ENCODE measurements at regions of chr21 and their contacts with region 1.

Region 1: DNA sequence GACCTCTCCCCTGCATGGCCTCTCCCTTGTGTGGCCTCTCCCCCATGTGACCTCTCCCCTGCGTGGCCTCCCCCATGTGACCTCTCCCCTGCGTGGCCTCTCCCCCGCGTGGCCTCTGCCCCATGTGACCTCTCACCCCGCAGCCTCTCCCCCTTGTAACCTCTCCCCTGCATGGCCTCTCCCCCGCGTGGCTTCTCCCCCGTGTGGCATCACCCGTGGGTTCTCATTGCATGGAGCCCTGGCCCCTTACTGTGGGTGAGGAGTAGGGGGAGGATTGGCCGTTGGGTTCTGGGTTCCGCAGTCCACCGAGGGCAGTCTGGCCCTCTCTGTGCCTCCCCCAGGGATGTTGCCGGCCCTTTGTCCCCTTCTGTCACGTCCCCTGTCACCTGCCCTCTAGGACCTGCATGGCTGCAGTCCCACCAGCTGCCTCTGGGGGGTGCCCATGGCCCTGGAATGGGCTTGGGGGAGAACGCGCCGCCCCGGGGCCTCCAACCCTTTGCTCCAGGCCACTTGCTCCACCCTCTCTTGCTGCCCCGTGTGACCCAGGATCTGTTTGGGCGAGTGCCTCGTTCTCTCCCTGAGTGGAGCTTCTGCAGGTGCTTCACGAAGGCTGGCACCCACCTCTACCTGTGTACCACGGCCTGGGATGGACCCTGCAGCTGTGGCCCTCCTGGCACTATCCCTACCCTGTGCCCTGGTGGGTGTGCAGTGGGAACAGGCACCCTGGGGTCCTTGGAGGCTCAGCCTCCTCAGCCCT is 21.3 kb downstream of the RRP1 start:
- DNase-seq: peak; percentile 77
- H3K27ac ChIP-seq: peak overlapping the region; percentile 99
- CTCF ChIP-seq: peak; percentile 92

Region 2: GRCh38 chr21:43975495-43975993 is 164.9 kb after region 1 on chr21:
- CTCF ChIA-PET with region 1: interaction called, 16 read pairs
- POLR2A ChIA-PET with region 1: no interaction called
- DNase-seq: peak; percentile 64
- H3K27ac ChIP-seq: peak overlapping the region; percentile 55
- CTCF ChIP-seq: peak; percentile 95

Region 3: DNA sequence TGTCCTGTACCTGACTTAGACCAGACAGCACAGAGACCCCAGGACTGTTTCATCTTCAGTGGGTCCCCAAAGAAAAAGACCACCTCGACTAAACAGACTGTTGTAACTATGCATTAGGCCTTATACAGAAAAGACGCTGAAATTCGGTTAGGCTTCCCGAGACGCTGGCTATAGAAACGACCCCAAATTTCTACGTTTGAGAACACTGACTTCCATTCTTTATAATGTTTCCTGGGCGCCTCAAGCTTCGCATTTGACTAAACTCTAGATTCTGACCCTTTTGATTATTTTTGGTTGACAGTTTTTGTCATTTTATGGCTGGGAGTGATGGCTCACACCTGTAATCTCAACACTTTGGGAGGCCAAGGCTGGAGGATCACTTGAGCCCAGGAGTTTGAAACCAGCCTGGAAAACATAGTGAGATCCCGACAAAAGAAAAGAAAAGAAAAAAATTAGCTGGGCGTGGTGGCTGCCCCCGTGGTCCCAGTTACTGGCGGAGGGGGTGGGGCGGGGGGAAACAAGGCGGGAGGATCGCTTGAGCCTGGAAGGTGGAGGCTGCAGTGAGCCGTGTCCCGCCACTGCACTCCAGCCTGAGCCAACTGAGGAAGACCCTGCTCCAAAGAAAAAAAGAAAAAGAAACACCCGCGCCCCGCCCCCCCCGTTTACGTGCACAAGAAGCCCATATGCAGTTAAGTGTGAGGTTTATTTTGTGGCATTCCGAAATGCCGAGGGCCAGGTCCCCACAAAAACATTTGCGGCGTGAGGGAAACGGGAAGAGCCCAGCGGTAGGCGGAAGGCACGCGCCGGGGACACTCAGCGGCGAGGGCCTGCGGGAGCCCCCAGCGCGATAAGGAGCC is 200.7 kb after region 1 on chr21:
- CTCF ChIA-PET with region 1: no interaction called
- POLR2A ChIA-PET with region 1: interaction called, 10 read pairs
- DNase-seq: no peak
- H3K27ac ChIP-seq: peak overlapping the region; percentile 88
- CTCF ChIP-seq: no peak

Region 4: DNA sequence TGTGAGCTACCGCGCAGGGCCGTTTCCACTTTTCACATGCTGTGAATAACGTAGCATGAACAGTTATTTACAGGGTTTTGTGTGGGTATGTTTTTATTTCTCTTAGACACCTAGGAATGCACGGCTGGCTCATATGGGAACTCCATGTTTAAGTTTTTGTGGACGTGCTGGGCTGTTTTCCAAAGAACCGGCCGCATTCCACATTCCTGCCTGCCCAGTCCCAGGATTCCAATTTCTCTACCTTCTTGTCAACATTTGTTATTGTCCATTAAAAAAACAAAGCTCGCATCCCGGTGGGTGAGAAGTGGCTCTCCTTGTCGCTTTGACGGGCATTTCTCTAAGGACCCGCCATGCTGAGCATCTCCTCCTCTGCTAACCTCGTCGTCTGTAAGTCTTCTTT is 597.5 kb after region 1 on chr21:
- CTCF ChIA-PET with region 1: no interaction called
- POLR2A ChIA-PET with region 1: no interaction called
- DNase-seq: no peak
- H3K27ac ChIP-seq: no peak overlapping the region
- CTCF ChIP-seq: no peak